GM12878 (cell line): ENCODE measurements at regions of chr5 and their contacts with region 1.

Region 1: GRCh38 chr5:115455301-115455707 is 89.3 kb downstream of the FEM1C start:
- DNase-seq: no peak
- ATAC-seq: no peak
- H3K4me3 ChIP-seq: no peak overlapping the region
- H3K27ac ChIP-seq: no peak overlapping the region
- H3K4me1 ChIP-seq: peaks cover 6% of the 10 kb centered on the region; the same call in 1 of the 2 replicates
- H3K27me3 ChIP-seq: no peaks in the 10 kb centered on the region
- CTCF ChIP-seq: no peak
- EP300 ChIP-seq: no peak
- POLR2A ChIP-seq: no peak
- RAD21 ChIP-seq: no peak

Region 2: GRCh38 chr5:115398719-115399118 is 56.6 kb before region 1 on chr5:
- CTCF ChIA-PET with region 1: no interaction called
- POLR2A ChIA-PET with region 1: no interaction called
- RAD21 ChIA-PET with region 1: no interaction called
- SMC1A ChIA-PET with region 1: no interaction called
- in situ Hi-C with region 1: no loop called
- intact Hi-C with region 1: no loop called
- DNase-seq: no peak
- ATAC-seq: no peak
- H3K4me3 ChIP-seq: no peak overlapping the region
- H3K27ac ChIP-seq: no peak overlapping the region
- H3K4me1 ChIP-seq: no peaks in the 10 kb centered on the region
- H3K27me3 ChIP-seq: no peaks in the 10 kb centered on the region
- CTCF ChIP-seq: no peak
- EP300 ChIP-seq: no peak
- POLR2A ChIP-seq: no peak
- RAD21 ChIP-seq: no peak

Region 3: GRCh38 chr5:115472271-115473025 is 17.1 kb after region 1 on chr5:
- CTCF ChIA-PET with region 1: interaction called, 10 read pairs
- POLR2A ChIA-PET with region 1: interaction called, 6 read pairs
- RAD21 ChIA-PET with region 1: no interaction called
- SMC1A ChIA-PET with region 1: interaction called, 8 read pairs
- in situ Hi-C with region 1: no loop called
- intact Hi-C with region 1: no loop called
- DNase-seq: no peak
- ATAC-seq: peak; percentile 52
- H3K4me3 ChIP-seq: no peak overlapping the region
- H3K27ac ChIP-seq: no peak overlapping the region
- H3K4me1 ChIP-seq: no peaks in the 10 kb centered on the region
- H3K27me3 ChIP-seq: no peaks in the 10 kb centered on the region
- CTCF ChIP-seq: no peak
- EP300 ChIP-seq: no peak
- POLR2A ChIP-seq: no peak
- RAD21 ChIP-seq: no peak